Caco-2 (cell line): ENCODE measurements at regions of chr21 and their contacts with region 1.

Region 1: GRCh38 chr21:32753818-32754610 is 17.5 kb downstream of the PAXBP1 start:
- DNase-seq: no peak
- H3K4me3 ChIP-seq: no peak overlapping the region
- H3K4me3 Mint-ChIP-seq: no peak overlapping the region
- H3K27ac Mint-ChIP-seq: no peak overlapping the region
- H3K4me1 ChIP-seq: no peaks in the 10 kb centered on the region
- H3K4me1 Mint-ChIP-seq: peaks cover 5% of the 10 kb centered on the region
- H3K27me3 ChIP-seq: no peaks in the 10 kb centered on the region
- H3K27me3 Mint-ChIP-seq: no peaks in the 10 kb centered on the region
- CTCF ChIP-seq: no peak

Region 2: DNA sequence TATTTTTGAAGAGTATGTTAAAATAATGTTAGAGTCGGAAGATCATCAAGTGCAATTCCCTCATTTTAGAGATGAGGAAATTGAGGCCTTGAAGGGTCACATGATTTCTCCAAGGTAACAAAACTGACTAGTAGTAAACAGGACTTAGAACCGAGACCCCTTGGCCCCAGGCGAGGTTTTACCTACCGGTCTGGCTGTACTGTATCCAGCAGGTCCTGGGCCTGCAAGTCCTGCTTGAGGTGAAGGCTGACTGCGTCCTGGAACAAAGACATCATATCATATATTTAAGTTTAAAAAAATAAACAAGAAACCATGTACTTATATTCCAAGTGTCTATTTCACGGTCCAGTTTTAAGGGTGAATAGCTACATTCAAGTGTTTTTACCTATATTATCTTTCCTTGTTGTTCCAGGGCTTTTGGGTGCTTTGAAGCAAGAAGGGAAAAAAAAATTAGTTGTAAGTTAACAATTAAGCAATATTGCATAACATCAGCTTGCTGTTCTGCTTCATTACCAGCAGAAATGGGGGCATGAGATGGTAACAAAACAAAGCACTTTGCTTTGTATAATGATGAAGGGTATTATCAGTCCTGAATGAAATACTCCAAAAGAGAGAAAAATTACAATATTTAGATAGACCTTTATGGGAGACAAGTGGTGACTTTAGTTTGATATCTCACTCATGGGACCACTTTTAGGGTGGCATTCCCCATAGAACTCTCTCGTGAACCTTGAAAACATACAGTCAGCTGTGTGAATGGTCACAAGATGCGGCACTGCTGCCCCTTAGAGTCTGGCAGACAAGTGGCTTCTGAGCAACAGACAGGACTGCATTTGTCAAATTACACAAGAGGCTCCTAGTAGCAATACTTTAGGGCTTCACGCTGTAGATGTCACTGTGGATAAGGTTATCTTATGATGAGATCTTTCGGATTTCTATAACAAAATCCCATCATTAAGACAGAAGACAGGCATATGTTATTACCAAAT is 112.0 kb before region 1 on chr21:
- CTCF ChIA-PET with region 1: no interaction called
- POLR2A ChIA-PET with region 1: no interaction called
- intact Hi-C with region 1: no loop called
- DNase-seq: no peak
- H3K4me3 ChIP-seq: no peak overlapping the region
- H3K4me3 Mint-ChIP-seq: no peak overlapping the region
- H3K27ac Mint-ChIP-seq: no peak overlapping the region
- H3K4me1 ChIP-seq: no peaks in the 10 kb centered on the region
- H3K4me1 Mint-ChIP-seq: no peaks in the 10 kb centered on the region
- H3K27me3 ChIP-seq: no peaks in the 10 kb centered on the region
- H3K27me3 Mint-ChIP-seq: no peaks in the 10 kb centered on the region
- CTCF ChIP-seq: no peak

Region 3: DNA sequence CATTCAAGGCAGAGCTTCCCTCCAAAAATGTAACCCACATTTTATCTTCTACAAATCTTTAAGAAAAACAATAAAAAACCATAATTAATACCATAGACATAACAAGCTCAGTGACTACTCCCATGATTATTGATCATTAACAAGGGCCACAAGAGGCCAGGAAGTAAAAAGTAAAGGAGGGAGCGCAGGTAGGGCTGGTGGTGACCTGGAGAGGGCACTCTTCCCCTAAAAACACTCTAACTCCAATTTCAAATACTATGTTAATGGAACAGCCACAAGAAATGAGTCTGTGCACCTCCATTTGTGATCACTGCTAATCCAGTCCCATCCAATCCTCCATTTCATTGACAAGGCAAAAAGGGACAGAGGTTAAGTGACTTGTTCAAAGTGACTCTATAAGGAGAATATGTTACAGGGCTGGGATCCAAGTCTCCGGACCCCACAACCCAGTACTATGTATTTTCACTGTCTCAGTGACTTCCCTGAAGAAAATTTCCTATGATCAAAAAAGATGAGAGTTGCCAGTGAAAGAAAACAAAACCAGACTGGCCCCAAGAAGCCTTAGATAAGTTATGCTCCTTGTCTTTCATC is 100.6 kb before region 1 on chr21:
- CTCF ChIA-PET with region 1: no interaction called
- POLR2A ChIA-PET with region 1: no interaction called
- intact Hi-C with region 1: loop called (anchors 10 kb)
- DNase-seq: peak in 1 of 2 experiments; percentile 49
- H3K4me3 ChIP-seq: no peak overlapping the region
- H3K4me3 Mint-ChIP-seq: no peak overlapping the region
- H3K27ac Mint-ChIP-seq: no peak overlapping the region
- H3K4me1 ChIP-seq: no peaks in the 10 kb centered on the region
- H3K4me1 Mint-ChIP-seq: no peaks in the 10 kb centered on the region
- H3K27me3 ChIP-seq: no peaks in the 10 kb centered on the region
- H3K27me3 Mint-ChIP-seq: no peaks in the 10 kb centered on the region
- CTCF ChIP-seq: peak; percentile 59 to 68

Region 4: GRCh38 chr21:32727687-32728455 is 26.1 kb before region 1 on chr21 and contains the start of gene SYNJ1:
- CTCF ChIA-PET with region 1: no interaction called
- POLR2A ChIA-PET with region 1: interaction called, 11 read pairs
- intact Hi-C with region 1: no loop called
- DNase-seq: peak; percentile 95
- H3K4me3 ChIP-seq: peak within 1 kb of the TSS; percentile 97
- H3K4me3 Mint-ChIP-seq: peak within 1 kb of the TSS; percentile 99
- H3K27ac Mint-ChIP-seq: peak within 1 kb of the TSS; percentile 91
- H3K4me1 ChIP-seq: peaks cover 4% of the 10 kb centered on the region; the same call in 1 of the 2 replicates
- H3K4me1 Mint-ChIP-seq: peaks cover 6% of the 10 kb centered on the region
- H3K27me3 ChIP-seq: no peaks in the 10 kb centered on the region
- H3K27me3 Mint-ChIP-seq: no peaks in the 10 kb centered on the region
- CTCF ChIP-seq: no peak
- total RNA-seq, gene SYNJ1: 8.3 and 11.5 TPM in 2 replicates

Region 5: GRCh38 chr21:32858628-32859027 is 104.6 kb after region 1 on chr21:
- CTCF ChIA-PET with region 1: no interaction called
- POLR2A ChIA-PET with region 1: no interaction called
- intact Hi-C with region 1: no loop called
- DNase-seq: no peak
- H3K4me3 ChIP-seq: no peak overlapping the region
- H3K4me3 Mint-ChIP-seq: no peak overlapping the region
- H3K27ac Mint-ChIP-seq: no peak overlapping the region
- H3K4me1 ChIP-seq: no peaks in the 10 kb centered on the region
- H3K4me1 Mint-ChIP-seq: no peaks in the 10 kb centered on the region
- H3K27me3 ChIP-seq: no peaks in the 10 kb centered on the region
- H3K27me3 Mint-ChIP-seq: peaks cover 17% of the 10 kb centered on the region
- CTCF ChIP-seq: no peak